ENCODE measurements at regions of chr6 and their contacts with region 1.

Region 1: GRCh38 chr6:167141667-167142432 is 15.9 kb downstream of the GPR31 start:
- DNase-seq: peak in 1 of 2 donors; percentile 39
- H3K4me3 ChIP-seq: no peak overlapping the region
- H3K27ac ChIP-seq: no peak overlapping the region
- H3K4me1 ChIP-seq: no peaks in the 10 kb centered on the region
- H3K27me3 ChIP-seq: no peaks in the 10 kb centered on the region
- CTCF ChIP-seq: peak; percentile 65 to 80 (median 77)
- POLR2A ChIP-seq: no peak

Region 2: DNA sequence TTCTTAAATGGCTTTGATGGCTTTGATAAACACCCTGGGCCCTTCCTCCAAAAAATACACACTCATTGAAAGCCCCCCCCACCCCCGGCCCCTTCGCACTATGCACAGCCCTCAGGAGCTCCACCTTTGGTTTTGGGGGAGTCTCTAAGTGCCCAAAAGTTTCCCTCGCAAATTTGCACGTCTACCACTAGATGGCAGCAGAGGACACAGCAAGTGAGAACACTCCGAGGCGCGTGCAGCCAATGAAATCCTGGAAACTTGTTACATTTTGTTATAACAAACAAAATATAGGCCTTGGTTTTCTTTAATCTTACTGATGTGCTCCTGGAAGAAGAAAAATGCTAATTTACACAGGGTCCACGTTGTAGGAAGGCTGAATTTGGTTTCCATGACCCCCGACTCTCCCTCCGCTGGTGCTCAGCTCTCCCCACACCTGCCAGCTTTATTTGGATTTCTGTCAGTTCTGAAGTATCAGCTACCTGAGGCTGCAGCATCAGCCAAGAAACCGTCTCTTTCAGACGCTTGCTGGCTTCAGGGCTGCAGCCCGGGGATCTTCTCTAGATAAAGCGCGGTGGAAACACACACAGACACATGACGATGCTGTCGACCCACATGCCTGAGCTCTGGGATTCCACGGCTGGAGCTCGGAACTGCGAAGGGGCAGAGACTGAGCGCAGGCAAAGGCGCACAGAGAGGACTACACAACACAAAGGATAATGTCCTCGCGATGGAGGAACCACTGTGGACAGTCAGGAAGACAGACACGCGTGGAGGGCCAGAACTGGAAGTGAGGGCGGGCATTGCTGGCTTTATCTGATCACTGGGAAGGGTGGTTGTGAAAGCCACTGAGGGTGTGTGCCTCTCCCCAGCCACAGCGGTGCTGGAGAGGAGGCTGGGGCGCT is 366.4 kb before region 1 on chr6:
- intact Hi-C with region 1: loop called (anchors 10 kb)
- DNase-seq: peak; percentile 42 to 53
- H3K4me3 ChIP-seq: no peak overlapping the region
- H3K27ac ChIP-seq: no peak overlapping the region
- H3K4me1 ChIP-seq: no peaks in the 10 kb centered on the region
- H3K27me3 ChIP-seq: no peaks in the 10 kb centered on the region
- CTCF ChIP-seq: peak; percentile 64 to 85 (median 74)
- POLR2A ChIP-seq: no peak